ENCODE measurements at regions of chrX and their contacts with region 1.

Region 1: DNA sequence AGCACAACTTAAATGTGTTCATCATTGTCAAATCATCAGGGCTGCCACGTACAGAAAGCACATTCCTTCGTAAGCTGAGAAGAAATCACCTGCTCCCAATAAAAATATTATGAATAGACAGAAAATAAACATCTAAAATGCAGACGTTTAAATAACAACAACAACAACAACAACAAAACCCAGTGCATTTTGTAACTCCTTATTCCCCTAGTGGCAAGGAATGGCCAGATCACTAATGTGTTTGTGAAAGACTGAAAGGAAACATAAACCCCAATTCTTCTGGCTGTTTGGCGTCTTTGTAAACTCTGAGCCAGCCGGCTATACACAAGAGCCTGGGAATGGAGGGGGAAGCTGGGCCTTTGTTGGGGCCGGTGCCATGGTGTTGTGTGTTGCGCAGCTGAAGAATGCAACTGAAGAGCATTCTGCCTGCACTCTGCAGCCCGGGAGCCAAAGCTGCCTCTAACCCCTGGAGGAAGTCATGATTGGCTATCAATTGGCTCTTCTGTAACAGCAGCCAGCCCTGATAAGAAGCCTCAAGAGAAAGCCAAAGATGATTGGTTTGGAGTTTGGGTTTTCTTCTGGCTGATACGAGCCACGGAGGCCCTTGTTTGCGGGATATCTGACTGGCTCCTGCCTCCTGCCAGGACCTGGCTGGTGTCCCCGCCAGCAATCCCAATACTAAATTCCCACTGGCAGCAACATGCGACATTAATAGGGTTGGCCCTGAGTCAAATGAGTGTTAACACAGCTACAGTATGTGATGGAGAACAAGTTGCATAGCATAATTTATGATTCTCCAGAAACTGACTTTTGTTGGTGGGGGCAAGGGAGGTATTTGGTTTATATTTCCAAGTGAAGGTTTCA is 89.7 kb upstream of the TFDP3 start:
- DNase-seq: no peak
- H3K4me3 ChIP-seq: no peak overlapping the region
- H3K27ac ChIP-seq: no peak overlapping the region
- H3K27me3 ChIP-seq: no peaks in the 10 kb centered on the region
- CTCF ChIP-seq: no peak

Region 2: GRCh38 chrX:133285341-133285740 is 22.5 kb before region 1 on chrX:
- CTCF ChIA-PET with region 1: interaction called, 10 read pairs
- POLR2A ChIA-PET with region 1: no interaction called
- DNase-seq: no peak
- H3K4me3 ChIP-seq: no peak overlapping the region
- H3K27ac ChIP-seq: no peak overlapping the region
- H3K27me3 ChIP-seq: no peaks in the 10 kb centered on the region
- CTCF ChIP-seq: no peak

Measured in AG04450 (cell line).